ENCODE measurements at regions of chr12 and their contacts with region 1.

Region 1: DNA sequence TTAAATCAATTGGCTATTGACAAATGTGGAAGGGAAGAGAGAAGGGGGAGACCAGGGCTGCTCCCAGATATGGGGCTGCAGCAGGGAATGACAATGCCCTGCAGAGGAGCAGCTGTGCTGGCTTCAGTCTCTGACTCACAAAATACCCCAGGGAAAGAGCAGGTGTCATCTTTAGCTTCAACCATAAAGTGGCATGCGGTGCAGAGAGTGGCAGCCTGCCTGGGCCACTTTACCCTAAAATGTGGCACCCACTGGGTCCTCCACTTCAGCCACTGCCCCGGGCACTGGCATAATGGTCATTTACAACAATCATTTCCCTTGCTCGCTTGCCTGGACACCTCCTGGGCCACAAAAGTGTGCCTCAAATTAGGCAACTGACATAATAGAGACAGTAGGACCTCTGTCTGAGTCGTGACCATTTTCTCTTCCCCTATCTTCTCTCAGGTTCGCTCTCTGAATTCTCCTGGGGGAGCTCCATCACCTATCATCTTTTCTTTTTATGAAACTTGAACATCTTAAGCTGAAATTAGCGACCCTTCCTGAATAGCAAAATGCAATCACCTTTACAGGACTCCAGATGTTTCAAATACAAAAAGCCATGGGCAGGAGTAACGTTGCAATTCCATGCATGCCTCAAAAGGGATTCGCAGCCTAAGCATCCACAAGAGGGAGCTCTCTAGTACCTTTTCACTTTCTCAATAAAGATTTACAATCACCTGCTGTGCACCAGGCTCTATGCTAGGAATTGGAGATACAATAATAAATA is 179.9 kb upstream of the ATF7IP start:
- DNase-seq: peak; percentile 69
- ATAC-seq: peak; percentile 76
- H3K4me3 ChIP-seq: peak overlapping the region in 3 of 5 experiments; percentile 30 to 52 (median 40)
- H3K4me3 Mint-ChIP-seq: peak overlapping the region; percentile 85
- H3K27ac ChIP-seq: no peak overlapping the region
- H3K27ac Mint-ChIP-seq: peak overlapping the region; percentile 88
- H3K4me1 ChIP-seq: peaks cover 13 to 21% of the 10 kb centered on the region in 2 donors
- H3K4me1 Mint-ChIP-seq: peaks cover 20% of the 10 kb centered on the region
- H3K27me3 ChIP-seq: no peaks in the 10 kb centered on the region
- H3K27me3 Mint-ChIP-seq: no peaks in the 10 kb centered on the region
- CTCF ChIP-seq: peak; percentile 81

Region 2: GRCh38 chr12:13799574-13799973 is 386.0 kb before region 1 on chr12:
- CTCF ChIA-PET with region 1: no interaction called
- POLR2A ChIA-PET with region 1: no interaction called
- intact Hi-C with region 1: no loop called
- DNase-seq: no peak
- ATAC-seq: no peak
- H3K4me3 ChIP-seq: no peak overlapping the region
- H3K4me3 Mint-ChIP-seq: no peak overlapping the region
- H3K27ac ChIP-seq: no peak overlapping the region
- H3K27ac Mint-ChIP-seq: no peak overlapping the region
- H3K4me1 ChIP-seq: no peaks in the 10 kb centered on the region
- H3K4me1 Mint-ChIP-seq: no peaks in the 10 kb centered on the region
- H3K27me3 ChIP-seq: no peaks in the 10 kb centered on the region
- H3K27me3 Mint-ChIP-seq: no peaks in the 10 kb centered on the region
- CTCF ChIP-seq: no peak

Region 3: GRCh38 chr12:13864081-13864673 is 321.4 kb before region 1 on chr12:
- CTCF ChIA-PET with region 1: interaction called, 13 read pairs
- POLR2A ChIA-PET with region 1: no interaction called
- intact Hi-C with region 1: no loop called
- DNase-seq: peak; percentile 73
- ATAC-seq: peak; percentile 82
- H3K4me3 ChIP-seq: no peak overlapping the region
- H3K4me3 Mint-ChIP-seq: no peak overlapping the region
- H3K27ac ChIP-seq: no peak overlapping the region
- H3K27ac Mint-ChIP-seq: no peak overlapping the region
- H3K4me1 ChIP-seq: no peaks in the 10 kb centered on the region
- H3K4me1 Mint-ChIP-seq: no peaks in the 10 kb centered on the region
- H3K27me3 ChIP-seq: peaks cover 0 to 16% (median 3%) of the 10 kb centered on the region in 4 experiments
- H3K27me3 Mint-ChIP-seq: peaks cover 52% of the 10 kb centered on the region
- CTCF ChIP-seq: peak; percentile 99

Region 4: DNA sequence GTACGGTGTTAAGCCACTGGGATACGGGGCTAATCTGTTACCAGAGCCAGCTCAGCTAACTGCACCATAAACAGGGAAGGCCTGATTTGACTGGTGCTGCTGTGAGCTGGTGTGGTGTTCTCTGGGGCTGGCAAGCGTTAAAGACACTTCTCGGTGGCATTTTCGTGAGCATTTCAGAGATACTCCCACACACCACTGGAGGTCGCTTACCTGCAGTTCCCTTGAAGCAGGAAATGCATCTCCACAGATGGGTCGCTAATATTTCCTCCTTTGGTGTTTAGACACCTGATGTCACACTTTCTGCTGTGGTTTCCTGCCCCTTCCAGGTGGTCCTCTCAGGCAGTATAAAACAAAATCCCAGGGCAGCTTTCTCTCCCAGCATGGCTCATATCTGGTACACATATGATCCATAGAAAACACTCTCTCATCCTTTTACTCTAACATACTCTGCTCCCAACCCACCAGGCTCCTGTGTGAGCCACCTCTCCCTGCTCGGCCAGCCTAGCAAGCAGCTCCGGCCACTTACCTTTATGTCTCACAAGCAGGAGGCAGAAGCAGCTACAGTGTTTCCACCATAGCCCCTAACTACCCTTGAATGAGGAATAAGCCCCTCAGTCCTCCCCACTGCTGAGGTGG is 74.3 kb before region 1 on chr12:
- CTCF ChIA-PET with region 1: interaction called, 24 read pairs
- POLR2A ChIA-PET with region 1: no interaction called
- intact Hi-C with region 1: no loop called
- DNase-seq: peak; percentile 82
- ATAC-seq: peak; percentile 97
- H3K4me3 ChIP-seq: no peak overlapping the region
- H3K4me3 Mint-ChIP-seq: peak overlapping the region; percentile 26
- H3K27ac ChIP-seq: no peak overlapping the region
- H3K27ac Mint-ChIP-seq: peak overlapping the region; percentile 67
- H3K4me1 ChIP-seq: peaks cover 13% of the 10 kb centered on the region in 2 donors
- H3K4me1 Mint-ChIP-seq: peaks cover 13% of the 10 kb centered on the region
- H3K27me3 ChIP-seq: no peaks in the 10 kb centered on the region
- H3K27me3 Mint-ChIP-seq: no peaks in the 10 kb centered on the region
- CTCF ChIP-seq: peak; percentile 76

Region 5: DNA sequence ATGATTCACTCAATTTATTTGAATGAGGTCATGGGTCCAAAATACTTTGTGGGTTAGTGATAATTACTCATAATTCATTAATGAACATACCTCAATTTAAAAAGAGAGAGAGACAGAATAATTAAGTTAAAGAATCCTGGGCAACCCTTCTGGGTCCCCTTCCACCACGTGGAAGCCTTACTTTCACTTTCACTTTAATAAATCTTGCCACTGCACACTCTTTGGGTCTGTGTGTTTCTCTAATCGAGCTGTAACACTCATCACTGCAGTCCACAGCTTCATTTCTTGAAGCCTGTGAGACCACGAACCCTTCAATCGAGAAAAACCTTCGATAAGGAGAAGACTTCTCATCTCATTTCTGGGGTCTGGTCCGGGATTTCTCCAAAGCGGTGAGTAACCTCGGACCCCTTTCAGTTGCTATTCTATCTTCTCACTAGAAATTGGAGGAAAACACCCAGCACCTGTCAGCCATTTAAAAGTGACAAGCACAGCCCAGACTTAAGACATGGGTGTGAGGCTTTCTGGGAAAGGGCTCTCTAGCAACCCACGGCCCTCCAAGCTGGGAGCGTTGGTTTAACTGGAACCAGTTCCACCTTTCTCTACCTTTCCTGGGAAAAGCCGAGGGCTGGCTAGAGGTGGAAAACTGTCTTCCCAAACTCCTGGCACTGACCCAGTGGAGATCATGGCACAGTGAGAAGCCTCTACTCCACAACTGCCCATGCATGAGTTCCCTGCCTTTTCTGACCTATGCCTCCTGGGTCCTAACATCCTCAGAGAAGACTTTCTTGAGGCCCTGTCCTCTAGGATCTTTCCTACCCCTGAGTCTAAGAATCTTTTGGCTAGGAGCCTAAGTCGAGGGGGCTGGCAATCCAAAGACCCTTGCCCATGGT is 31.0 kb after region 1 on chr12:
- CTCF ChIA-PET with region 1: interaction called, 10 read pairs
- POLR2A ChIA-PET with region 1: interaction called, 3 read pairs
- intact Hi-C with region 1: no loop called
- DNase-seq: peak; percentile 40
- ATAC-seq: peak; percentile 54
- H3K4me3 ChIP-seq: peak overlapping the region in 4 of 5 experiments; percentile 1 to 62 (median 41)
- H3K4me3 Mint-ChIP-seq: peak overlapping the region; percentile 76
- H3K27ac ChIP-seq: peak overlapping the region in 1 of 2 donors; percentile 36
- H3K27ac Mint-ChIP-seq: peak overlapping the region; percentile 81
- H3K4me1 ChIP-seq: peaks cover 0 to 15% of the 10 kb centered on the region in 2 donors
- H3K4me1 Mint-ChIP-seq: peaks cover 22% of the 10 kb centered on the region
- H3K27me3 ChIP-seq: no peaks in the 10 kb centered on the region
- H3K27me3 Mint-ChIP-seq: no peaks in the 10 kb centered on the region
- CTCF ChIP-seq: no peak

Region 6: GRCh38 chr12:14454098-14454907 is 268.7 kb after region 1 on chr12:
- CTCF ChIA-PET with region 1: interaction called, 23 read pairs
- POLR2A ChIA-PET with region 1: no interaction called
- intact Hi-C with region 1: no loop called
- DNase-seq: peak; percentile 57
- ATAC-seq: peak; percentile 87
- H3K4me3 ChIP-seq: no peak overlapping the region
- H3K4me3 Mint-ChIP-seq: no peak overlapping the region
- H3K27ac ChIP-seq: peak overlapping the region in 1 of 2 donors; percentile 7
- H3K27ac Mint-ChIP-seq: peak overlapping the region; percentile 72
- H3K4me1 ChIP-seq: peaks cover 0 to 8% of the 10 kb centered on the region in 2 donors
- H3K4me1 Mint-ChIP-seq: peaks cover 40% of the 10 kb centered on the region
- H3K27me3 ChIP-seq: no peaks in the 10 kb centered on the region
- H3K27me3 Mint-ChIP-seq: no peaks in the 10 kb centered on the region
- CTCF ChIP-seq: peak; percentile 52

Region 7: DNA sequence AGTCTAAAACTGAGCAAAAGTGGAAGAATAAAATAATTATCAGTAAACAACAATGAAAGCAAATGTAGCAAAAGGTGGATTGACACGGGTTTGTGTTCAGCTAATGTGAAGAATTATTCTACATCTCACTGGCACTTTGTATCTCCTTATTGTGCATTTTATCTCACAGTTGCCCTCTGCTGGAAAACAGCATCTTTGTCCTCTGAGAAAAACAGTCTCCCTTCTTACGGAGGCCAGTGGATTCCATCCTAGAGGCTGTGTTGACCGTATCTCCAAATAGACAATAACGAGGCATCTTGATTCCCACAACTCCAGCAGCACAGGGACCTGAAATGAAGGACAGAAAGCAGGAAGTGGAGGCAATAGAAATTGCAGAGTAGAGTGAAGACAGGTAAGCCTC is 433.4 kb after region 1 on chr12:
- CTCF ChIA-PET with region 1: interaction called, 12 read pairs
- POLR2A ChIA-PET with region 1: no interaction called
- intact Hi-C with region 1: no loop called
- DNase-seq: peak; percentile 32
- ATAC-seq: no peak
- H3K4me3 ChIP-seq: no peak overlapping the region
- H3K4me3 Mint-ChIP-seq: no peak overlapping the region
- H3K27ac ChIP-seq: no peak overlapping the region
- H3K27ac Mint-ChIP-seq: peak overlapping the region; percentile 17
- H3K4me1 ChIP-seq: peaks cover 34 to 40% of the 10 kb centered on the region in 2 donors
- H3K4me1 Mint-ChIP-seq: peaks cover 42% of the 10 kb centered on the region
- H3K27me3 ChIP-seq: no peaks in the 10 kb centered on the region
- H3K27me3 Mint-ChIP-seq: no peaks in the 10 kb centered on the region
- CTCF ChIP-seq: peak; percentile 23

Region 8: GRCh38 chr12:14664510-14664909 is 478.9 kb after region 1 on chr12:
- CTCF ChIA-PET with region 1: interaction called, 4 read pairs
- POLR2A ChIA-PET with region 1: no interaction called
- intact Hi-C with region 1: loop called (anchors 1 kb)
- DNase-seq: peak; percentile 77
- ATAC-seq: peak; percentile 80
- H3K4me3 ChIP-seq: no peak overlapping the region
- H3K4me3 Mint-ChIP-seq: no peak overlapping the region
- H3K27ac ChIP-seq: no peak overlapping the region
- H3K27ac Mint-ChIP-seq: no peak overlapping the region
- H3K4me1 ChIP-seq: no peaks in the 10 kb centered on the region
- H3K4me1 Mint-ChIP-seq: peaks cover 12% of the 10 kb centered on the region
- H3K27me3 ChIP-seq: no peaks in the 10 kb centered on the region
- H3K27me3 Mint-ChIP-seq: no peaks in the 10 kb centered on the region
- CTCF ChIP-seq: peak; percentile 82